Sigmoid colon (tissue), 7 donors: ENCODE measurements at regions of chr1 and their contacts with region 1.

Region 1: DNA sequence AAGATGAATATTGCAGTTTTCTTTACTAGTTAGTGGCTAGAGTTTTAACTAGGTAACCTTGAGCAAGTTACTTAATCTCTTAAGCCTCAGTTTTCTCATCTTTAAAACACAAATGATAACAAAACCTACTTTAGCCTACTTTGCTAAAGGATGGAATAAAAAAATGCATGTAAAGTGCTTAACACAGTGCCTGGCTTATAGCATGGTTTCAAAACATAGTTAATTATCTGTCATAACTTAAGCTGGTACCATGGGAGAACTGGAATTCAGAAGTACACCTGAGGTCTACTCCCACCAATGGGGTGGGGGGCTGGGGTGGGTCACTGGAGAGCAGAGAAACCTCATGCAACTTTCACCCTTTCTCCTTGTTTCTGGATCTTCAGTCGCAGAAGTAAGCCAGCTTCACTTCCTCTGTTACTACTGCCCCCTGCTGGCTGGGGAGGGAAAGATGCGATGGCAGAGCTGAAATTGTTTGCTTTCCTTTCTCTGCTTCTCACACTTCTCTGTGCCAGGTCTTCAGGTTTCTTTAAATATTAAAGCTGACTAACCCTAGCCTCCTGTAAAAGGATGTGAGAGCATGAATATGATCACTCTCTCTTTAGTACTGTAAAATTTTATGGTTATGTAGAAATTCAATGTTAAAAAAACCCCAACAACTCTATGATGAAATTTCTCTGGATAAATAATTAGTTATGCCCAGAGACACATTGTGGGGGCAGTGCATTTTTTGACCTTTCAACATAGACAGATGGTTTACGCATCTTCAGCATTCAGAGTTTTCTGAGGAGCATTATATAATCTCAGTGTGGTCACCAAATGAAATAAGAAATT is 324.2 kb downstream of the HLX start:
- DNase-seq: peak; percentile 88
- H3K4me3 ChIP-seq: no peak overlapping the region
- H3K27ac ChIP-seq: peak overlapping the region; percentile 54 to 70 (median 62)
- H3K4me1 ChIP-seq: peaks cover 0 to 30% (median 14%) of the 10 kb centered on the region in 4 donors
- H3K27me3 ChIP-seq: no peaks in the 10 kb centered on the region
- CTCF ChIP-seq: peak; percentile 46 to 88 (median 72)
- EP300 ChIP-seq: no peak
- POLR2A ChIP-seq: no peak

Region 2: GRCh38 chr1:220873868-220874655 is 329.4 kb before region 1 on chr1:
- intact Hi-C with region 1: loop called (anchors 2 kb)
- DNase-seq: no peak
- H3K4me3 ChIP-seq: no peak overlapping the region
- H3K27ac ChIP-seq: peak overlapping the region in 3 of 4 donors; percentile 95 to 100 (median 99)
- H3K4me1 ChIP-seq: peaks cover 0 to 65% (median 51%) of the 10 kb centered on the region in 4 donors
- H3K27me3 ChIP-seq: no peaks in the 10 kb centered on the region
- CTCF ChIP-seq: peak; percentile 63 to 76 (median 68)
- EP300 ChIP-seq: no peak
- POLR2A ChIP-seq: no peak